ENCODE measurements at regions of chr5 and their contacts with region 1.

Region 1: GRCh38 chr5:38845526-38846378 is at the start of gene OSMR:
- DNase-seq: peak; percentile 90
- ATAC-seq: peak; percentile 96
- H3K4me3 ChIP-seq: peak within 1 kb of the TSS; percentile 85 to 99
- H3K27ac ChIP-seq: peak within 1 kb of the TSS; percentile 98
- H3K4me1 ChIP-seq: peaks cover 18% of the 10 kb centered on the region
- H3K27me3 ChIP-seq: no peaks in the 10 kb centered on the region
- CTCF ChIP-seq: no peak
- total RNA-seq, gene OSMR: 82.4 TPM

Region 2: GRCh38 chr5:38551030-38552017 is 294.4 kb before region 1 on chr5:
- CTCF ChIA-PET with region 1: interaction called, 18 read pairs
- POLR2A ChIA-PET with region 1: no interaction called
- in situ Hi-C with region 1: no loop called
- intact Hi-C with region 1: no loop called
- DNase-seq: no peak
- ATAC-seq: peak; percentile 69
- H3K4me3 ChIP-seq: no peak overlapping the region; a peak in 1 of 4 replicates
- H3K27ac ChIP-seq: peak overlapping the region; percentile 86
- H3K4me1 ChIP-seq: peaks cover 81% of the 10 kb centered on the region
- H3K27me3 ChIP-seq: no peaks in the 10 kb centered on the region
- CTCF ChIP-seq: peak; percentile 82

Region 3: GRCh38 chr5:39074016-39074886 is 228.5 kb after region 1 on chr5 and contains the start of gene RICTOR:
- CTCF ChIA-PET with region 1: no interaction called
- POLR2A ChIA-PET with region 1: no interaction called
- in situ Hi-C with region 1: no loop called
- intact Hi-C with region 1: loop called (anchors 10 kb)
- DNase-seq: no peak
- ATAC-seq: peak; percentile 94
- H3K4me3 ChIP-seq: peak within 1 kb of the TSS; percentile 88 to 97
- H3K27ac ChIP-seq: peak within 1 kb of the TSS; percentile 79
- H3K4me1 ChIP-seq: peaks cover 23% of the 10 kb centered on the region; the same call in 1 of the 2 replicates
- H3K27me3 ChIP-seq: no peaks in the 10 kb centered on the region
- CTCF ChIP-seq: no peak
- total RNA-seq, gene RICTOR: 21.3 TPM